PC-3 (cell line): ENCODE measurements at regions of chr4 and their contacts with region 1.

Region 1: GRCh38 chr4:158259955-158260575 is 49.8 kb downstream of the TMEM144 start:
- DNase-seq: peak; percentile 70
- ATAC-seq: no peak
- H3K4me3 ChIP-seq: no peak overlapping the region
- H3K27ac ChIP-seq: no peak overlapping the region
- H3K4me1 ChIP-seq: no peaks in the 10 kb centered on the region
- H3K27me3 ChIP-seq: no peaks in the 10 kb centered on the region
- CTCF ChIP-seq: peak; percentile 56

Region 2: DNA sequence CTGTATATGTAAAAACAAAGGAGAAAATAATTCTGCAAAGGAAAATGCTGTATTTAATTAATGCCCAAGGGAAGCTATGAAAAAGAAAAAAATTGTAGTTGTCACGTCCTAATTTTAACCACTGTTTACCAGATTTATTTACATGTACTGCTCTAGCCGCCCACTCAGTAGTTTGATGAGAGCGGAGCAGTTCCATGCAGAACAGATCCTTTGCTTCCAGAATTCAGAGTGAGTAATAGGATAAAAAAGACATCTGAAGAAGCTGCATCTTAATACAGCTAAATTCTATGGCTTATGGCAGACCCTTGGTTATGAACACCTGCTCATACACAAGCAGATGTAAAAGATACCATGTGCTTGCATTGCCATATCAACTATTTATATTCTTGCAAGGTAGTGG is 374.3 kb before region 1 on chr4:
- CTCF ChIA-PET with region 1: no interaction called
- POLR2A ChIA-PET with region 1: no interaction called
- intact Hi-C with region 1: no loop called
- DNase-seq: no peak
- ATAC-seq: no peak
- H3K4me3 ChIP-seq: no peak overlapping the region
- H3K27ac ChIP-seq: no peak overlapping the region
- H3K4me1 ChIP-seq: no peaks in the 10 kb centered on the region
- H3K27me3 ChIP-seq: no peaks in the 10 kb centered on the region
- CTCF ChIP-seq: no peak

Region 3: GRCh38 chr4:158051401-158052235 is 208.4 kb before region 1 on chr4:
- CTCF ChIA-PET with region 1: no interaction called
- POLR2A ChIA-PET with region 1: no interaction called
- intact Hi-C with region 1: no loop called
- DNase-seq: no peak
- ATAC-seq: no peak
- H3K4me3 ChIP-seq: no peak overlapping the region
- H3K27ac ChIP-seq: no peak overlapping the region
- H3K4me1 ChIP-seq: no peaks in the 10 kb centered on the region
- H3K27me3 ChIP-seq: no peaks in the 10 kb centered on the region
- CTCF ChIP-seq: no peak

Region 4: GRCh38 chr4:158322109-158322508 is 62.0 kb after region 1 on chr4:
- CTCF ChIA-PET with region 1: no interaction called
- POLR2A ChIA-PET with region 1: no interaction called
- intact Hi-C with region 1: loop called (anchors 5 kb)
- DNase-seq: peak; percentile 35
- ATAC-seq: peak; percentile 94
- H3K4me3 ChIP-seq: no peak overlapping the region
- H3K27ac ChIP-seq: no peak overlapping the region
- H3K4me1 ChIP-seq: peaks cover 12% of the 10 kb centered on the region
- H3K27me3 ChIP-seq: no peaks in the 10 kb centered on the region
- CTCF ChIP-seq: no peak

Region 5: DNA sequence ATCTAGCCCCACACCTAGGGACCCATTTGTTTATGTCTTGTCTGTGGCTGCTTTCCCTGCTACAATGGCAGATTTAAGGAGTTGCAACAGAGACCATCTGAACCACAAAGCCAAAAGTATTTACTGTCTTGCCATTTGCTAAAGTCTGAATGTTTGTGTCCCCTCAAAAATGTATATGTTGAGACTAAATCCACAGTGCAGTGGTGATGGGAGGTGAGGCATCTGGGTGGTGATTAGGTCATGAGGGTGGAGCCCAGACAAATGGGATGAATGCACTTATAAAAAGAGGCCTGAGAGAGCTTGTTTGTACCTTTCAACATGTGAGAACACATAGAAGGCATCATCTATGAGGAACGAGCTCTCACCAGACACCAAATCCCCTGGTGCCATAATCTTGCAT is 87.5 kb after region 1 on chr4:
- CTCF ChIA-PET with region 1: no interaction called
- POLR2A ChIA-PET with region 1: no interaction called
- intact Hi-C with region 1: no loop called
- DNase-seq: no peak
- ATAC-seq: no peak
- H3K4me3 ChIP-seq: no peak overlapping the region
- H3K27ac ChIP-seq: no peak overlapping the region
- H3K4me1 ChIP-seq: no peaks in the 10 kb centered on the region
- H3K27me3 ChIP-seq: no peaks in the 10 kb centered on the region
- CTCF ChIP-seq: no peak

Region 6: GRCh38 chr4:158371158-158371557 is 111.1 kb after region 1 on chr4:
- CTCF ChIA-PET with region 1: no interaction called
- POLR2A ChIA-PET with region 1: no interaction called
- intact Hi-C with region 1: loop called (anchors 10 kb)
- DNase-seq: peak; percentile 50
- ATAC-seq: peak; percentile 72
- H3K4me3 ChIP-seq: no peak overlapping the region
- H3K27ac ChIP-seq: peak overlapping the region; percentile 80
- H3K4me1 ChIP-seq: peaks cover 29% of the 10 kb centered on the region
- H3K27me3 ChIP-seq: no peaks in the 10 kb centered on the region
- CTCF ChIP-seq: no peak

Region 7: GRCh38 chr4:158410272-158410671 is 150.2 kb after region 1 on chr4:
- CTCF ChIA-PET with region 1: no interaction called
- POLR2A ChIA-PET with region 1: no interaction called
- intact Hi-C with region 1: loop called (anchors 2 kb)
- DNase-seq: peak; percentile 45
- ATAC-seq: peak; percentile 75
- H3K4me3 ChIP-seq: no peak overlapping the region
- H3K27ac ChIP-seq: no peak overlapping the region
- H3K4me1 ChIP-seq: no peaks in the 10 kb centered on the region
- H3K27me3 ChIP-seq: no peaks in the 10 kb centered on the region
- CTCF ChIP-seq: peak; percentile 41; the same call in 1 of the 2 replicates

Region 8: DNA sequence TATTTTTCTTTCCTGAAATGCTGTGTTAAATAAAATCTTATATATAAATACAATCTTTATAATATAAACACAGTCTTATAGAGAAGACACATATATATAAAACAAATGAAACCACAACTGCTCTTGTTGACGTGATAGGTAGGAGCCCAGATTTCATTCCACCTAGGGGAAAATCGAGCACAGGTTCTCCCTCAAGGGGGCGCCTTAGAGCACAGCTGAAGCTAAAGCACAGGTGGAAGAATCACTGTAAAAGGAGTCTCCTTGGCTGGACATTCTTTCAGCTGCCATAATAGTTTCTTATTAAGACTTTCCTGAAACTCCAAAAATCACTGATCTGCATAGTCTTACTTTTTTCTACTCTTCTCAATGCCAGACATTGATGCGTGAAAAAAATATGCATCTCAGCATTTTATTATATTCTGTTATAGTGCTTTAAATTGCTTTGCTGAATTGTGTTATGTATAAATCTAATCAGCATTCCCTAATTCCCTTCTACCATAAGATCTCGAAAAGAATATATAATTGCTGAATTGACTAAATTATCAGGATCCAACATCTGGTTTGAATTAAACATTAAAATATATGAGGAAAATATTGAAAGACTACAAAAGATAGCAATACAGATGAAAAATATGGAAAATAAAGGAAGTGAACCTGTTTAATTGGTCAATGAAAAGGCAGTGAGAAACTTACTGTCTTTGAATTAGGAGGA is 236.1 kb after region 1 on chr4:
- CTCF ChIA-PET with region 1: no interaction called
- POLR2A ChIA-PET with region 1: no interaction called
- intact Hi-C with region 1: loop called (anchors 5 kb)
- DNase-seq: peak; percentile 58
- ATAC-seq: no peak
- H3K4me3 ChIP-seq: no peak overlapping the region
- H3K27ac ChIP-seq: no peak overlapping the region
- H3K4me1 ChIP-seq: no peaks in the 10 kb centered on the region
- H3K27me3 ChIP-seq: no peaks in the 10 kb centered on the region
- CTCF ChIP-seq: peak; percentile 62

Region 9: DNA sequence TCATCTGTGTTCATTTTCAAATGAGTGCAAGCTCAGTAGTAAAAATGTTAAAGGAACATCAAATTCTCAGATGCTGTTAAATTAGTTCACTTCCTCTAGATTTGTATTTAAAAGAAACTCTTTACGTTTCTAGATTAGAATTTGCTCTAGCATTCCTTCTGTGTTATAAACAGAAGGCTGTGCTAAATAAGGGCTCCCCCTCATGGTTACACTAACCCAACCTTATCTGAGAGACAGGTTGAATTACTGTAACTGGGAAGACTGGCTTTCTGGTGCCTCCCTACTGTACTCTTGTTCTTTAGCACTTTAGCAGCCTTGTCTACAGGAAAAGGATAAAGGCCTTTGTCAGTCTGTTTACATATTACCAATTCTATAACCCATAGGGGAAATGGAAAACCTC is 318.4 kb after region 1 on chr4:
- CTCF ChIA-PET with region 1: no interaction called
- POLR2A ChIA-PET with region 1: no interaction called
- intact Hi-C with region 1: loop called (anchors 1 kb)
- DNase-seq: peak; percentile 59
- ATAC-seq: peak; percentile 97
- H3K4me3 ChIP-seq: no peak overlapping the region
- H3K27ac ChIP-seq: no peak overlapping the region
- H3K4me1 ChIP-seq: peaks cover 4% of the 10 kb centered on the region; the same call in 1 of the 2 replicates
- H3K27me3 ChIP-seq: no peaks in the 10 kb centered on the region
- CTCF ChIP-seq: peak; percentile 70

Region 10: DNA sequence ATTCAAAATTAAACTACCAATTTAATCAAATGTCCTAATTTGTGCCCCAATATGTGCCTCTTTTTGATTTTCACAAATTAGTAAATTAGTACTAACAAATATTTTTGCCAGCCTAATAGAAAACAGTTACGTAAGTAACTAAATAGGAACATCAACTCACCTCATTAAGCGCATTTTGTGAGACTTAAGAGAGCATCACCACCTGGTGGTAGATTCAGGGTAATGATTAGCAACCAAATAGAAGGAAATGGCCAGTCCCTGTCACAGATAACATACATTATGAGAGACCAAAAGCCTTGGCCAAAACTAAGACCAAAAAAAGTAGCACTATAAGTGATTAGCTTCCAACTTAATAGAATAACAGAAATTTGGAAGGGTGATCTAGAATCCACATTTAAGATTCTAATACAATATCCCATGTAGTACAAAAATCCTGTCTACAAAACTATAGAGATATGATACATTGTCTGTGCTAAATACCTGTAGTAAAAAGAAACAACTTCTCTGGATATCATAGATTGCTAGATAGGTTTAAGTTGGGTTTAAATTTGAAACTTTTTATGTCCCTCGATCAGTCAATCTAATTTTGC is 364.9 kb after region 1 on chr4:
- CTCF ChIA-PET with region 1: no interaction called
- POLR2A ChIA-PET with region 1: no interaction called
- intact Hi-C with region 1: loop called (anchors 1 kb)
- DNase-seq: peak; percentile 75
- ATAC-seq: peak; percentile 63
- H3K4me3 ChIP-seq: no peak overlapping the region
- H3K27ac ChIP-seq: no peak overlapping the region
- H3K4me1 ChIP-seq: 0 out of 2 replicates have a peak, but pooled peaks cover 3% of the 10 kb centered on the region
- H3K27me3 ChIP-seq: no peaks in the 10 kb centered on the region
- CTCF ChIP-seq: peak; percentile 83